ENCODE measurements at regions of chr7 and their contacts with region 1.

Region 1: GRCh38 chr7:148575640-148576411 is 14.7 kb upstream of the C7orf33 start:
- DNase-seq: peak; percentile 61 to 76
- H3K4me3 ChIP-seq: no peak overlapping the region
- H3K4me3 Mint-ChIP-seq: no peak overlapping the region
- H3K27ac Mint-ChIP-seq: no peak overlapping the region
- H3K4me1 ChIP-seq: no peaks in the 10 kb centered on the region
- H3K4me1 Mint-ChIP-seq: no peaks in the 10 kb centered on the region
- H3K27me3 ChIP-seq: no peaks in the 10 kb centered on the region
- H3K27me3 Mint-ChIP-seq: peaks cover 3% of the 10 kb centered on the region
- CTCF ChIP-seq: peak; percentile 85 to 90

Region 2: GRCh38 chr7:148515716-148516695 is 59.8 kb before region 1 on chr7:
- CTCF ChIA-PET with region 1: no interaction called
- POLR2A ChIA-PET with region 1: no interaction called
- intact Hi-C with region 1: no loop called
- DNase-seq: no peak
- H3K4me3 ChIP-seq: no peak overlapping the region
- H3K4me3 Mint-ChIP-seq: no peak overlapping the region
- H3K27ac Mint-ChIP-seq: no peak overlapping the region
- H3K4me1 ChIP-seq: peaks cover 8% of the 10 kb centered on the region; the same call in 1 of the 2 replicates
- H3K4me1 Mint-ChIP-seq: peaks cover 24% of the 10 kb centered on the region
- H3K27me3 ChIP-seq: no peaks in the 10 kb centered on the region
- H3K27me3 Mint-ChIP-seq: no peaks in the 10 kb centered on the region
- CTCF ChIP-seq: no peak

Region 3: GRCh38 chr7:148782757-148783456 is 207.1 kb after region 1 on chr7:
- CTCF ChIA-PET with region 1: no interaction called
- POLR2A ChIA-PET with region 1: no interaction called
- intact Hi-C with region 1: loop called (anchors 5 kb)
- DNase-seq: no peak
- H3K4me3 ChIP-seq: no peak overlapping the region
- H3K4me3 Mint-ChIP-seq: no peak overlapping the region
- H3K27ac Mint-ChIP-seq: no peak overlapping the region
- H3K4me1 ChIP-seq: no peaks in the 10 kb centered on the region
- H3K4me1 Mint-ChIP-seq: no peaks in the 10 kb centered on the region
- H3K27me3 ChIP-seq: no peaks in the 10 kb centered on the region
- H3K27me3 Mint-ChIP-seq: no peaks in the 10 kb centered on the region
- CTCF ChIP-seq: no peak